Naive thymus-derived CD4-positive, alpha-beta T cell (primary cell): ENCODE measurements at regions of chr16 and their contacts with region 1.

Region 1: GRCh38 chr16:85305996-85306792 is 193.9 kb upstream of the CIBAR2 start:
- DNase-seq: peak; percentile 61 to 87 (median 85)
- ATAC-seq: peak; percentile 88
- H3K4me3 ChIP-seq: no peak overlapping the region
- H3K4me3 Mint-ChIP-seq: peak overlapping the region; percentile 45 to 86 (median 61)
- H3K27ac ChIP-seq: peak overlapping the region; percentile 57
- H3K27ac Mint-ChIP-seq: peak overlapping the region; percentile 86 to 98 (median 94)
- H3K4me1 ChIP-seq: peaks cover 0 to 70% of the 10 kb centered on the region in 2 donors
- H3K4me1 Mint-ChIP-seq: peaks cover 20 to 74% (median 56%) of the 10 kb centered on the region in 7 donors
- H3K27me3 ChIP-seq: no peaks in the 10 kb centered on the region
- H3K27me3 Mint-ChIP-seq: no peaks in the 10 kb centered on the region

Region 2: DNA sequence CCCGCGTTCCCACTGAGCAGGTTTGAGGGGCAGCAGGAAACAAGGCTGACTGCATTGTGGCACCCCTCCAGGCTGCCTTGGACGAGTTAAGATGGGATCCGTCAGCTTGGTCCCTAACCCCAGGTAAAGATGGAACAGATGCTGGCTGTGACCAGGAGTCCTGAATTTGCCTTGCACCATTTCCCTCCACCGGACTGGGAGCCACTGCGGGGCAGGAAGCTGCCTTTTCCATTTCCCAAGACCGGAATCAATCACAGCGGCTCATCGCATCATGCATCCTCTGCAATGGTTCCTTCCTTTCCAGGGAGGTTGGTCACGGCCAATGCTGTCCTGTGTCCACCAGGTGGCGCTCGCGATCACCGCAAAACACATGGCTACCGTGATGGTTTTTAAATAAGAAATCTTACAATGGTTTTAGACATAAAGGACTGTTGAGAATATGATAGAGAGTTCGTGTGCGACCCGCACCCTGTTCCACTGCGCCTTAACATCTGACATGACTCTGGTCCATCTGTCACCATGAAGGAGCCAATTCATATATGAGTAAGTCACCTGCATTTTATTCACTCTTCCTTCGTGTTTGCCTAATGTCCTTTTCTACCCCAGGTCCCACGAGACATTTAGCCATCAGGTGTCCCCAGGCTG is 794.9 kb before region 1 on chr16:
- CTCF ChIA-PET with region 1: no interaction called
- POLR2A ChIA-PET with region 1: no interaction called
- intact Hi-C with region 1: loop called in 1 of 2 experiments (anchors 10 kb)
- DNase-seq: peak; percentile 55 to 88 (median 79)
- ATAC-seq: peak; percentile 62
- H3K4me3 ChIP-seq: no peak overlapping the region
- H3K4me3 Mint-ChIP-seq: peak overlapping the region in 9 of 10 donors; percentile 11 to 71 (median 62)
- H3K27ac ChIP-seq: no peak overlapping the region
- H3K27ac Mint-ChIP-seq: peak overlapping the region; percentile 55 to 94 (median 82)
- H3K4me1 ChIP-seq: peaks cover 53 to 77% of the 10 kb centered on the region in 2 donors
- H3K4me1 Mint-ChIP-seq: peaks cover 48 to 79% (median 74%) of the 10 kb centered on the region in 7 donors
- H3K27me3 ChIP-seq: no peaks in the 10 kb centered on the region
- H3K27me3 Mint-ChIP-seq: no peaks in the 10 kb centered on the region

Region 3: GRCh38 chr16:85286970-85287824 is 19.0 kb before region 1 on chr16:
- CTCF ChIA-PET with region 1: no interaction called
- POLR2A ChIA-PET with region 1: no interaction called
- intact Hi-C with region 1: no loop called
- DNase-seq: no peak
- ATAC-seq: no peak
- H3K4me3 ChIP-seq: no peak overlapping the region
- H3K4me3 Mint-ChIP-seq: no peak overlapping the region
- H3K27ac ChIP-seq: no peak overlapping the region
- H3K27ac Mint-ChIP-seq: no peak overlapping the region
- H3K4me1 ChIP-seq: no peaks in the 10 kb centered on the region
- H3K4me1 Mint-ChIP-seq: no peaks in the 10 kb centered on the region
- H3K27me3 ChIP-seq: no peaks in the 10 kb centered on the region
- H3K27me3 Mint-ChIP-seq: no peaks in the 10 kb centered on the region

Region 4: GRCh38 chr16:85330694-85331188 is 24.5 kb after region 1 on chr16:
- CTCF ChIA-PET with region 1: interaction called, 33 read pairs
- POLR2A ChIA-PET with region 1: interaction called, 9 read pairs
- intact Hi-C with region 1: loop called (anchors 1 kb)
- DNase-seq: peak in 7 of 9 donors; percentile 32 to 49 (median 45)
- ATAC-seq: peak; percentile 52
- H3K4me3 ChIP-seq: no peak overlapping the region
- H3K4me3 Mint-ChIP-seq: no peak overlapping the region
- H3K27ac ChIP-seq: no peak overlapping the region
- H3K27ac Mint-ChIP-seq: peak overlapping the region in 1 of 9 donors; percentile 41
- H3K4me1 ChIP-seq: peaks cover 0 to 10% of the 10 kb centered on the region in 2 donors
- H3K4me1 Mint-ChIP-seq: peaks cover 10 to 27% (median 23%) of the 10 kb centered on the region in 7 donors
- H3K27me3 ChIP-seq: no peaks in the 10 kb centered on the region
- H3K27me3 Mint-ChIP-seq: peaks cover 0 to 31% (median 5%) of the 10 kb centered on the region in 5 donors

Region 5: DNA sequence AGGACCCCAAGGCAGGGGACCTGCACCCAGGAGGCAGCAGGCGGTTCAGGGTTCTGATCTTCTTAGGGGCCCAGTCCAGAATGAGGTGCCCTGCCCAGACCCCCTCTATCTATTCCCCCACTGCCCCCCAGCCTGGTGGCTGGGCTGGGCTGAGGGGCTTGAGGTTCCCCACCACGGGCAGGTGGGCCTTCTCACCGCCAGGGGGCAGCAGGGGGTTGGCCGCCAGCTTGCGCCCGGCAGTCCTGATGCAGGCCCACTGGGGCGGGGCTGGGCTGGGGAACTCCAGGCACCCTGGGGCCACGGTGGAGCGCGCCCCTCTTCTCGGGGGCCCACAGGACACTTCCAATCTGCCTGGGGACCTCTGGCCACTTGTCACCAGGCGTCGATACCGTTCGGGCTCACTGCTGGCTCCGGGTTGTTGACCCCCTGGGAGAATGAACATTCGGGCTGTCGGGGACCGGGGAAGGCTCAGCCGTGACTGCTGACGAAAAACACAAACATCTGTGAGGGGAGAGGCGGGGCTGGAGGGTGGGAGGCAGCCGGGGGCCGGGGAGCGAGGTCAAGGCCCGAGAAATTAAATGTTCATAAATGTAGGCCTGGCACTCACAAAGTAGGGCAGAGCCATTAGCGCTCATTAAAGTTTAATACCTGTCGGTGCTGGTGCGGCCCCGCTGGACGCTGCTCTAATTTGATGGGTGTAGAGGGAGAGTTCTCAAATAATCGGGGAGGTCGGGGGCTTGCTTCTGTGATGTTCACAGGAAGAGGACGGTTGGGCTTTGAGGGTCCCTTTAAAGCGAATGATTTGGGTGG is 87.7 kb after region 1 on chr16:
- CTCF ChIA-PET with region 1: interaction called, 4 read pairs
- POLR2A ChIA-PET with region 1: no interaction called
- intact Hi-C with region 1: loop called in 1 of 2 experiments (anchors 1 kb)
- DNase-seq: peak; percentile 26 to 73 (median 51)
- ATAC-seq: peak; percentile 82
- H3K4me3 ChIP-seq: no peak overlapping the region
- H3K4me3 Mint-ChIP-seq: no peak overlapping the region
- H3K27ac ChIP-seq: no peak overlapping the region
- H3K27ac Mint-ChIP-seq: no peak overlapping the region
- H3K4me1 ChIP-seq: no peaks in the 10 kb centered on the region
- H3K4me1 Mint-ChIP-seq: peaks cover 0 to 2% (median 0%) of the 10 kb centered on the region in 7 donors
- H3K27me3 ChIP-seq: no peaks in the 10 kb centered on the region
- H3K27me3 Mint-ChIP-seq: peaks cover 0 to 3% (median 0%) of the 10 kb centered on the region in 5 donors

Region 6: GRCh38 chr16:85428168-85428898 is 122.1 kb after region 1 on chr16:
- CTCF ChIA-PET with region 1: no interaction called
- POLR2A ChIA-PET with region 1: no interaction called
- intact Hi-C with region 1: loop called in 1 of 2 experiments (anchors 1 kb)
- DNase-seq: peak in 3 of 9 donors; percentile 7 to 42 (median 12)
- ATAC-seq: peak; percentile 71
- H3K4me3 ChIP-seq: no peak overlapping the region
- H3K4me3 Mint-ChIP-seq: no peak overlapping the region
- H3K27ac ChIP-seq: no peak overlapping the region
- H3K27ac Mint-ChIP-seq: no peak overlapping the region
- H3K4me1 ChIP-seq: no peaks in the 10 kb centered on the region
- H3K4me1 Mint-ChIP-seq: peaks cover 0 to 1% (median 0%) of the 10 kb centered on the region in 7 donors
- H3K27me3 ChIP-seq: no peaks in the 10 kb centered on the region
- H3K27me3 Mint-ChIP-seq: peaks cover 0 to 13% (median 5%) of the 10 kb centered on the region in 5 donors

Region 7: GRCh38 chr16:85688586-85689284 is 382.5 kb after region 1 on chr16 and contains the start of gene GINS2:
- CTCF ChIA-PET with region 1: no interaction called
- POLR2A ChIA-PET with region 1: no interaction called
- intact Hi-C with region 1: loop called in 1 of 2 experiments (anchors 5 kb)
- DNase-seq: peak; percentile 77 to 90 (median 89)
- ATAC-seq: peak; percentile 100
- H3K4me3 ChIP-seq: peak within 1 kb of the TSS; percentile 69
- H3K4me3 Mint-ChIP-seq: peak within 1 kb of the TSS; percentile 64 to 85 (median 76)
- H3K27ac ChIP-seq: peak within 1 kb of the TSS; percentile 51
- H3K27ac Mint-ChIP-seq: peak within 1 kb of the TSS in 3 of 9 donors; percentile 46 to 63 (median 56)
- H3K4me1 ChIP-seq: peaks cover 5% of the 10 kb centered on the region in 2 donors
- H3K4me1 Mint-ChIP-seq: peaks cover under 1 to 21% (median 7%) of the 10 kb centered on the region in 7 donors
- H3K27me3 ChIP-seq: no peaks in the 10 kb centered on the region
- H3K27me3 Mint-ChIP-seq: peaks cover 0 to 8% (median 6%) of the 10 kb centered on the region in 5 donors
- total RNA-seq, gene GINS2: 1.0 to 43.6 (median 1.9) TPM